ENCODE measurements at regions of chr6 and their contacts with region 1.

Region 1: GRCh38 chr6:111799576-111800258 is 73.5 kb downstream of the FYN start:
- DNase-seq: no peak
- H3K4me3 Mint-ChIP-seq: no peak overlapping the region
- H3K27ac Mint-ChIP-seq: peak overlapping the region; percentile 56
- H3K4me1 Mint-ChIP-seq: peaks cover 74% of the 10 kb centered on the region
- H3K27me3 Mint-ChIP-seq: no peaks in the 10 kb centered on the region

Region 2: GRCh38 chr6:111721753-111722154 is 78.0 kb before region 1 on chr6:
- intact Hi-C with region 1: loop called (anchors 5 kb)
- DNase-seq: peak; percentile 36
- H3K4me3 Mint-ChIP-seq: no peak overlapping the region
- H3K27ac Mint-ChIP-seq: no peak overlapping the region
- H3K4me1 Mint-ChIP-seq: peaks cover 54% of the 10 kb centered on the region
- H3K27me3 Mint-ChIP-seq: no peaks in the 10 kb centered on the region